ENCODE measurements at regions of chr17 and their contacts with region 1.

Region 1: DNA sequence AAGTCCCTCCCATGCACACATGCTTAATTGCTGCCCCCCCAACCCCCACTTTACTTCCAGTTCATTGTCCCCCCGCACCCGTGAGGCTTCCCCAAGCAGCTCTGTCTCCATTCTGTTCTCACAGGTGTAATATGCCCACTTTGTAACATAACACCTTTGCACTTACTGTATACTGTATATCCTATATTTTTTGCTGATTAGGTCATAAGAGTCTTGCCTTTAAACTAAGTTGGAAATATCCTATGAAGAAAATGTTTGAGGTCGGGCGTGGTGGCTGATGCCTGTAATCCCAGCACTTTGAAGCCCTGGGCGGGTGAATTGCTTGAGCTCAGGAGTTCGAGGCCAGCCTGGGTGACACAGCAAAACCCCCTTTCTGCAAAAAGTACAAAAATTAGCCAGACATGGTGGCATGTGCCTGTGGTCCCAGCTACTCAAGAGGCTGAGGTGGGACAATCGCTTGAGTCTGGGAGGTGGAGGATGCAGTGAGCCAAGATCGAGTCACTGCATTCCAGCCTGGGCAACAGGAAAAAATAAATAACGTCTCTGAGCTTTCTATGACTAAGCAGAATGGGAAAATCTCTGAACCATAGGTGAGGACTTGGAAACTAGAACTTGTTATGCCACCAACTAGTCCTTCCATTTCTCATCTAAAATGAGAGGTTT is 76.1 kb downstream of the TNRC6C start:
- DNase-seq: no peak
- H3K4me3 ChIP-seq: no peak overlapping the region
- CTCF ChIP-seq: no peak

Region 2: GRCh38 chr17:78089576-78090281 is 55.2 kb after region 1 on chr17:
- in situ Hi-C with region 1: loop called (anchors 5 kb)
- DNase-seq: no peak
- H3K4me3 ChIP-seq: no peak overlapping the region
- CTCF ChIP-seq: no peak

Region 3: GRCh38 chr17:78112518-78113226 is 78.1 kb after region 1 on chr17:
- in situ Hi-C with region 1: no loop called
- DNase-seq: no peak
- H3K4me3 ChIP-seq: no peak overlapping the region
- CTCF ChIP-seq: peak; percentile 96

Region 4: GRCh38 chr17:78140169-78140976 is 105.8 kb after region 1 on chr17:
- in situ Hi-C with region 1: loop called (anchors 5 kb)
- DNase-seq: no peak
- H3K4me3 ChIP-seq: no peak overlapping the region
- CTCF ChIP-seq: no peak

Measured in astrocyte of the cerebellum (primary cell).